T-cell (primary cell): ENCODE measurements at regions of chr14 and their contacts with region 1.

Region 1: GRCh38 chr14:21917699-21918436 is 244.2 kb upstream of the OR4E1 start:
- DNase-seq: peak in 32 of 35 experiments; percentile 14 to 84 (median 50)
- ATAC-seq: peak; percentile 63 to 71 (median 64)
- H3K4me3 ChIP-seq: peak overlapping the region in 1 of 2 donors; percentile 18
- H3K4me3 Mint-ChIP-seq: peak overlapping the region; percentile 63 to 75 (median 67)
- H3K27ac ChIP-seq: peak overlapping the region; percentile 15
- H3K27ac Mint-ChIP-seq: peak overlapping the region; percentile 79 to 89
- H3K4me1 ChIP-seq: peaks cover 2 to 43% of the 10 kb centered on the region in 2 experiments
- H3K4me1 Mint-ChIP-seq: peaks cover 48 to 76% (median 66%) of the 10 kb centered on the region in 3 donors
- H3K27me3 ChIP-seq: no peaks in the 10 kb centered on the region
- H3K27me3 Mint-ChIP-seq: no peaks in the 10 kb centered on the region

Region 2: GRCh38 chr14:21902650-21903103 is 15.2 kb before region 1 on chr14:
- CTCF ChIA-PET with region 1: interaction called, 4 to 17 read pairs
- POLR2A ChIA-PET with region 1: no interaction called
- DNase-seq: peak in 20 of 35 experiments; percentile 7 to 60 (median 35)
- ATAC-seq: peak; percentile 92 to 95 (median 94)
- H3K4me3 ChIP-seq: no peak overlapping the region
- H3K4me3 Mint-ChIP-seq: peak overlapping the region; percentile 50 to 67 (median 62)
- H3K27ac ChIP-seq: no peak overlapping the region
- H3K27ac Mint-ChIP-seq: peak overlapping the region; percentile 87 to 89
- H3K4me1 ChIP-seq: peaks cover 4 to 6% of the 10 kb centered on the region in 2 experiments
- H3K4me1 Mint-ChIP-seq: peaks cover 14 to 21% (median 16%) of the 10 kb centered on the region in 3 donors
- H3K27me3 ChIP-seq: no peaks in the 10 kb centered on the region
- H3K27me3 Mint-ChIP-seq: no peaks in the 10 kb centered on the region

Region 3: GRCh38 chr14:21933681-21934080 is 15.8 kb after region 1 on chr14:
- CTCF ChIA-PET with region 1: interaction called, 5 to 28 read pairs
- POLR2A ChIA-PET with region 1: interaction called in 1 of 2 experiments, 3 read pairs
- DNase-seq: peak in 1 of 35 experiments; percentile 58
- ATAC-seq: peak in 1 of 4 experiments; percentile 44
- H3K4me3 ChIP-seq: no peak overlapping the region
- H3K4me3 Mint-ChIP-seq: no peak overlapping the region
- H3K27ac ChIP-seq: no peak overlapping the region
- H3K27ac Mint-ChIP-seq: no peak overlapping the region
- H3K4me1 ChIP-seq: peaks cover 0 to 7% of the 10 kb centered on the region in 2 experiments
- H3K4me1 Mint-ChIP-seq: peaks cover 9 to 23% (median 9%) of the 10 kb centered on the region in 3 donors
- H3K27me3 ChIP-seq: no peaks in the 10 kb centered on the region
- H3K27me3 Mint-ChIP-seq: no peaks in the 10 kb centered on the region

Region 4: GRCh38 chr14:21978184-21978998 is 60.5 kb after region 1 on chr14:
- CTCF ChIA-PET with region 1: interaction called, 4 to 11 read pairs
- POLR2A ChIA-PET with region 1: no interaction called
- DNase-seq: peak in 34 of 35 experiments; percentile 22 to 80 (median 50)
- ATAC-seq: peak; percentile 71 to 81 (median 76)
- H3K4me3 ChIP-seq: peak overlapping the region in 1 of 2 donors; percentile 31
- H3K4me3 Mint-ChIP-seq: peak overlapping the region; percentile 65 to 69 (median 68)
- H3K27ac ChIP-seq: peak overlapping the region; percentile 29
- H3K27ac Mint-ChIP-seq: peak overlapping the region; percentile 78 to 83
- H3K4me1 ChIP-seq: peaks cover 0 to 6% of the 10 kb centered on the region in 2 experiments
- H3K4me1 Mint-ChIP-seq: peaks cover 22 to 31% (median 28%) of the 10 kb centered on the region in 3 donors
- H3K27me3 ChIP-seq: no peaks in the 10 kb centered on the region
- H3K27me3 Mint-ChIP-seq: peaks cover 3 to 7% of the 10 kb centered on the region in 2 donors

Region 5: DNA sequence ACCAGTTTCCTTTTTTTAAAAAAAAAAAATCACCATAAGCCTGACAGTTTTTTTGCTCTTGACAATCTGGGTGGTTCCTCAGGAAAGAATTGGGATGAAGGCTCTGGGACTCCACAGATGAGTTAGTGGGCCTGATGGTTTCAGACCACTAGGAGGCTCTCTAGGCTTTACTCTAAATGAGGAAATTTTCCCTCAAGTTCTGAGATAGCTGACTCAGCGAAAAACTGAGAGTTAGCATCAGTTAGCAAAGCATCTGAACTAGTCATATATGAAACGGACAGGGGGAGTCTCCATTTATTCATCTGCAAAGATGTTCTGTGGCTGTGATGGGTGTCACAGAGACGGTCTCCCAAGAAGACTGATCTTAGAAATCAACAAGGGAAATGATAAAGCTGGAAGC is 70.1 kb after region 1 on chr14:
- CTCF ChIA-PET with region 1: interaction called in 1 of 2 experiments, 12 read pairs
- POLR2A ChIA-PET with region 1: no interaction called
- DNase-seq: peak in 1 of 35 experiments; percentile 54
- ATAC-seq: peak in 1 of 4 experiments; percentile 51
- H3K4me3 ChIP-seq: no peak overlapping the region
- H3K4me3 Mint-ChIP-seq: peak overlapping the region in 1 of 3 donors; percentile 13
- H3K27ac ChIP-seq: no peak overlapping the region
- H3K27ac Mint-ChIP-seq: peak overlapping the region in 1 of 2 donors; percentile 66
- H3K4me1 ChIP-seq: no peaks in the 10 kb centered on the region
- H3K4me1 Mint-ChIP-seq: peaks cover 5 to 21% (median 6%) of the 10 kb centered on the region in 3 donors
- H3K27me3 ChIP-seq: no peaks in the 10 kb centered on the region
- H3K27me3 Mint-ChIP-seq: peaks cover 0 to 3% of the 10 kb centered on the region in 2 donors